Left cardiac atrium (tissue), 4 donors: ENCODE measurements at regions of chr7 and their contacts with region 1.

Region 1: GRCh38 chr7:45863715-45864114 is 9.2 kb downstream of the CCDC201 start:
- DNase-seq: no peak
- ATAC-seq: no peak

Region 2: GRCh38 chr7:45157653-45158401 is 705.9 kb before region 1 on chr7 and contains the start of gene RAMP3:
- intact Hi-C with region 1: loop called in 1 of 2 experiments (anchors 10 kb)
- DNase-seq: peak; percentile 58
- ATAC-seq: peak; percentile 35 to 60
- total RNA-seq, gene RAMP3: 40.8 to 55.0 TPM

Region 3: DNA sequence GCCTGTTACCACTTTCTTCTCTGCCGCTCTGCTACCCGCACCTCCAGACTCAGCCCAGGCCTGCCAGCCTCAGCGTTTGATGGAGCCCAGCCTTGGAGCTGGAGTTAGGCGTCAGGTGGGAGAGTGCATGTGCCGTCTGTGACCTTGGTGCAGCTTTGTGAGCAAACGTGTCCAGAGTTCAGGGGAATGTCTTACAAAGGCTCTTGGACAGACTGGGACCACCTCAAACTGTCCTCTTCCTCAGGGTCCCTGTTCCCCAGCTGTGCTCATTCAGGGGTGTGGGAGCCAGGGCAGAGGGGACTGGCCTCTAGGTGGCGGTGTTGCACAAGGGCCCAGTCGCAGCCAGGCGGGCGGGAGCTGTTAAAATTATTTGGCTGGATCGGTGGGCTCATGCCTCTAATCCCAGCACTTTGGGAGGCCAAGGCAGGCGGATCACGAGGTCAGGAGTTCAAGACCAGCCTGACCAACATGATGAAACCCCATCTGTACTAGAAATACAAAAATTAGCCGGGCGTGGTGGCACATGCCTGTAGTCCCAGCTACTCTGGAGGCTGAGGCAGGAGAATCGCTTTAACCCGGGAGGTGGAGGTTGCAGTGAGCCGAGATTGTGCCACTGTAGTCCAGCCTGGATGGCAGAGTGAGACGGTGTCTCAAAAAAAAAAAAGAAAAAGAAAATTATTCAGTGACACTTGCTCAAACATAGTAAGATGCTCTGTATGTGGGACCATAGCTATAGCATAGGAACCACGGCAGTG is 200.4 kb before region 1 on chr7:
- intact Hi-C with region 1: loop called in 1 of 2 experiments (anchors 10 kb)
- DNase-seq: no peak
- ATAC-seq: peak in 1 of 2 donors; percentile 68

Region 4: GRCh38 chr7:45972629-45973312 is 109.1 kb after region 1 on chr7:
- intact Hi-C with region 1: no loop called
- DNase-seq: no peak
- ATAC-seq: no peak